HEK293T (cell line): ENCODE measurements at regions of chr1 and their contacts with region 1.

Region 1: DNA sequence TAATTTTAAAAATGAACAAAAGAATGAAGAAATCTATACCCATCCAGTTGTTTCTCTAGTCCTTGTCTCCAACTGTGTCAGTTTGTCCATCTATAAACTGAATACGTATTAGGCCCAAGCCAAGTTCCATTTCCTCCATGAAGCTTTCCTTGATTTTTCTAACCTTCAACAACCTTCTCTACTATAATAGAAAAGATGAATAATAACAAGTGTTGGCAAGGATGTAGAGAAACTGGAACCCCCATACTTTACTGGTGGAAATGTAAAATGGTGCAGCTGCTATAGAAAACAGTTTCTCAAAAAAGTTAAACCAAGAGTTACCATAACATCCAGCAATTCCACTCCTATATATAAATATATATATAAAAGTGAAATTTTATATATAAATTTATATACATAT is 10.6 kb downstream of the KIAA0319L start:
- DNase-seq: no peak

Region 2: GRCh38 chr1:35557292-35558063 is 10.9 kb after region 1 on chr1 and contains the starts of genes KIAA0319L and NCDN:
- CTCF ChIA-PET with region 1: no interaction called
- POLR2A ChIA-PET with region 1: interaction called, 11 read pairs
- DNase-seq: peak; percentile 93

Region 3: DNA sequence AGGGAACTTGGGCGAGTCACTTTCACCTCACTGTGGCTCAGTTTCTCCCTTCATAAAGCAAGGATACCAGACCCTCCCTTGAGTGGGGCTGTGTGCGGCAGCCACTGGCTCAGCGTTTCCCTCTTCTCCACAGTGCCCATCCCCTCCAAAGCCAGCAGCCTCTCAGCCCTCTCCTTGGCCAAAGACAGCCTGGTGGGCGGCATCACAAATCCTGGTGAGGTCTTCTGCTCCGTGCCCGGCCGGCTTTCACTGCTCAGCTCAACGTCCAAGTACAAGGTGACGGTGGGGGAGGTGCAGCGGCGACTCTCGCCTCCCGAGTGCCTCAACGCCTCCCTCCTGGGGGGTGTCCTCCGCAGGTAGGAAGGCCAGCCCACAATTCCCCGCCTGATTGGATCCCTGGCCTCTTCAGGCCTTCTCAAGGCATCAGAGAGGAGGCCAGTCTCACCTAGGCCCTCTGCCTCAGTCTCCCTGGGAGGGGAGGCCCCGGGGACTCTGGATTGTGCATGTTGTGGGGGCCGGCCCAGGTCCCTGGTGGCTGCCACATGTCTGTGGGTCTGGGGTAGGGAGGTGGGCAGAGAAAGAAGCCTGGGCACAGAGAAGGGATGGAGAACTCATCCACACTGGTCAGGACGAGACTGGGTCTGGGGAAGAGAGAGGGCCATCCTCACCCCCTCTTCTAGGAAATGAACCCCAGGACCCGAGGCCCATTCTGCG is 41.7 kb after region 1 on chr1:
- CTCF ChIA-PET with region 1: no interaction called
- POLR2A ChIA-PET with region 1: no interaction called
- DNase-seq: no peak